ENCODE measurements at regions of chr10 and their contacts with region 1.

Region 1: GRCh38 chr10:72048450-72049124 is 39.8 kb downstream of the SPOCK2 start:
- DNase-seq: peak; percentile 96
- ATAC-seq: peak; percentile 97
- H3K4me3 Mint-ChIP-seq: no peak overlapping the region
- H3K27ac Mint-ChIP-seq: peak overlapping the region; percentile 28
- H3K4me1 Mint-ChIP-seq: peaks cover 14% of the 10 kb centered on the region
- H3K27me3 Mint-ChIP-seq: no peaks in the 10 kb centered on the region

Region 2: GRCh38 chr10:71893920-71894319 is 154.7 kb before region 1 on chr10:
- CTCF ChIA-PET with region 1: interaction called, 39 read pairs
- POLR2A ChIA-PET with region 1: no interaction called
- intact Hi-C with region 1: loop called (anchors 1 kb)
- DNase-seq: no peak
- ATAC-seq: no peak
- H3K4me3 Mint-ChIP-seq: no peak overlapping the region
- H3K27ac Mint-ChIP-seq: no peak overlapping the region
- H3K4me1 Mint-ChIP-seq: peaks cover 6% of the 10 kb centered on the region
- H3K27me3 Mint-ChIP-seq: peaks cover 3% of the 10 kb centered on the region

Region 3: DNA sequence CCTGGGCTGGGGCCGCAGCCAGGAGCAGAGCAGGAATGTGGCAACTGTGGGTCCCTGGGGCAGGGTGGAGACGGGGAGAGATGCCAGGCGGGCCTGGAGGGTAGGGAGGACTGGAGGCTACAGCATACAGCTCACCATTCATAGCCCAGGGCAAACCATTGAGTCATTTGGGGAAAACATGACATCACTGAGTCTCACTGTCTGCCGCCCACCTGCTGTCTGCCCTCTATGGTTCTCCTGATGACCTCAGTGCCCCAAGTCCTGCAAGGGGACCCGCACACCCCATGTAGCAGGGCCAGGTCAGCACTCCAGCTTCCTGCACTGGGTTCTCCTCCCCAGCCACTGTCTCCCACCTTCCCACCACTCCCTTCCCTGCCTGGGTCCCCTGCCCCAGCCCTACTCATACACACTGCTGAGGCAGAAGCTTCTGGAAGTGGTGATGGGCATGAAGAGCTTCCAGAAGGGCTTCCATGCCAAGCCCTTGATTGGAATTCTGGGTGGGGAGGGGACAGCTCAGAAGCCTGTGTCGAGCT is 74.0 kb before region 1 on chr10:
- CTCF ChIA-PET with region 1: interaction called, 11 read pairs
- POLR2A ChIA-PET with region 1: no interaction called
- intact Hi-C with region 1: no loop called
- DNase-seq: peak; percentile 80
- ATAC-seq: peak; percentile 93
- H3K4me3 Mint-ChIP-seq: no peak overlapping the region
- H3K27ac Mint-ChIP-seq: peak overlapping the region; percentile 3
- H3K4me1 Mint-ChIP-seq: peaks cover 31% of the 10 kb centered on the region
- H3K27me3 Mint-ChIP-seq: no peaks in the 10 kb centered on the region

Region 4: GRCh38 chr10:72069751-72070526 is 21.4 kb after region 1 on chr10:
- CTCF ChIA-PET with region 1: interaction called, 89 read pairs
- POLR2A ChIA-PET with region 1: no interaction called
- intact Hi-C with region 1: no loop called
- DNase-seq: peak; percentile 50
- ATAC-seq: no peak
- H3K4me3 Mint-ChIP-seq: no peak overlapping the region
- H3K27ac Mint-ChIP-seq: peak overlapping the region; percentile 85
- H3K4me1 Mint-ChIP-seq: peaks cover 36% of the 10 kb centered on the region
- H3K27me3 Mint-ChIP-seq: no peaks in the 10 kb centered on the region

Region 5: DNA sequence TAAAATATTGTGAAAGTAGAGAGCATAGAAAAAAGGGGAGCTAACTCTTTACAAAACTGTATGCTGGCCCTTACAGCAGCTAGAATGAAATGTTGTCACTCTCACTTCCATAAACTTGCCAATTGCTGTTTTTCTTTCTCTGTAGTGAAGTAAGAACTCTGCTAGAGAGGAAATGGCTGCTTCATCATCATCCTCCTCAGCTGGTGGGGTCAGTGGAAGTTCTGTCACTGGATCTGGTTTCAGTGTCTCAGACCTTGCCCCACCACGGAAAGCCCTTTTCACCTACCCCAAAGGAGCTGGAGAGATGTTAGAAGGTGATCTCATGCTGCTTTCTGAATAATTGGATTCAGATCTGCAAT is 175.1 kb after region 1 on chr10:
- CTCF ChIA-PET with region 1: interaction called, 15 read pairs
- POLR2A ChIA-PET with region 1: interaction called, 3 read pairs
- intact Hi-C with region 1: loop called (anchors 1 kb)
- DNase-seq: no peak
- ATAC-seq: peak; percentile 41
- H3K4me3 Mint-ChIP-seq: peak overlapping the region; percentile 52
- H3K27ac Mint-ChIP-seq: peak overlapping the region; percentile 92
- H3K4me1 Mint-ChIP-seq: peaks cover 55% of the 10 kb centered on the region
- H3K27me3 Mint-ChIP-seq: no peaks in the 10 kb centered on the region

Measured in activated CD4-positive, alpha-beta T cell treated with anti-CD3 and anti-CD28 coated beads for 36 hours (primary cell).